ENCODE measurements at regions of chr17 and their contacts with region 1.

Region 1: GRCh38 chr17:26818736-26819135 is 475.2 kb upstream of the WSB1 start:
- DNase-seq: peak in 2 of 3 donors; percentile 2 to 7
- H3K4me3 ChIP-seq: no peak overlapping the region
- H3K4me3 Mint-ChIP-seq: no peak overlapping the region
- H3K27ac ChIP-seq: no peak overlapping the region
- H3K27ac Mint-ChIP-seq: no peak overlapping the region
- H3K4me1 ChIP-seq: no peaks in the 10 kb centered on the region
- H3K4me1 Mint-ChIP-seq: no peaks in the 10 kb centered on the region
- H3K27me3 ChIP-seq: no peaks in the 10 kb centered on the region
- H3K27me3 Mint-ChIP-seq: no peaks in the 10 kb centered on the region
- CTCF ChIP-seq: no peak

Region 2: GRCh38 chr17:26765860-26766709 is 52.7 kb before region 1 on chr17:
- intact Hi-C with region 1: loop called in 1 of 2 experiments (anchors 10 kb)
- DNase-seq: no peak
- H3K4me3 ChIP-seq: no peak overlapping the region
- H3K4me3 Mint-ChIP-seq: no peak overlapping the region
- H3K27ac ChIP-seq: no peak overlapping the region
- H3K27ac Mint-ChIP-seq: no peak overlapping the region
- H3K4me1 ChIP-seq: no peaks in the 10 kb centered on the region
- H3K4me1 Mint-ChIP-seq: no peaks in the 10 kb centered on the region
- H3K27me3 ChIP-seq: peaks cover 0 to 12% of the 10 kb centered on the region in 2 donors
- H3K27me3 Mint-ChIP-seq: peaks cover 0 to 17% (median 2%) of the 10 kb centered on the region in 3 donors
- CTCF ChIP-seq: no peak

Region 3: GRCh38 chr17:26807024-26807423 is 11.7 kb before region 1 on chr17:
- intact Hi-C with region 1: no loop called
- DNase-seq: no peak
- H3K4me3 ChIP-seq: no peak overlapping the region
- H3K4me3 Mint-ChIP-seq: no peak overlapping the region
- H3K27ac ChIP-seq: no peak overlapping the region
- H3K27ac Mint-ChIP-seq: no peak overlapping the region
- H3K4me1 ChIP-seq: no peaks in the 10 kb centered on the region
- H3K4me1 Mint-ChIP-seq: no peaks in the 10 kb centered on the region
- H3K27me3 ChIP-seq: no peaks in the 10 kb centered on the region
- H3K27me3 Mint-ChIP-seq: no peaks in the 10 kb centered on the region
- CTCF ChIP-seq: no peak